ENCODE measurements at regions of chr1 and their contacts with region 1.

Region 1: DNA sequence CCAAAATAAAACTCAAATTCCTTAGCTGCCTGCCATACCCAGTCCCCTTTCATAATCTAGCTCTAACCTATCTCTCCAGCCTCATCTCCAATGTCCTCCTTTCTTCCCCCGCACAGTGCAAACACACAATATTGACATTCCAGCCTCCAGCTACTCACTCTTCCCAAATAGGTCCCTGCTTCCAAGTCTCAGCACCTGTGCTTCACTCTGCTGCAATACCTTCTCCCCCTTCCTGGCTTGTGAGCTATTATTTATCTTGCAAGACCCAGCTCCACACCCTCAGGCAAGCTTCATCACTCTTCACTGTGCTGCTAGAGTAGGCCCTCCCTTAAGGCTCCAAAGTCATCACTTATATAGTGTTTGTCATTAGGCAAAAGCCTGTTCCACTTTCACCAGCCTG is 9.7 kb downstream of the PLPP3 start:
- DNase-seq: no peak
- ATAC-seq: peak; percentile 61
- H3K4me3 ChIP-seq: no peak overlapping the region
- H3K27ac ChIP-seq: no peak overlapping the region
- H3K4me1 ChIP-seq: peaks cover 36% of the 10 kb centered on the region
- H3K27me3 ChIP-seq: no peaks in the 10 kb centered on the region
- CTCF ChIP-seq: no peak

Region 2: DNA sequence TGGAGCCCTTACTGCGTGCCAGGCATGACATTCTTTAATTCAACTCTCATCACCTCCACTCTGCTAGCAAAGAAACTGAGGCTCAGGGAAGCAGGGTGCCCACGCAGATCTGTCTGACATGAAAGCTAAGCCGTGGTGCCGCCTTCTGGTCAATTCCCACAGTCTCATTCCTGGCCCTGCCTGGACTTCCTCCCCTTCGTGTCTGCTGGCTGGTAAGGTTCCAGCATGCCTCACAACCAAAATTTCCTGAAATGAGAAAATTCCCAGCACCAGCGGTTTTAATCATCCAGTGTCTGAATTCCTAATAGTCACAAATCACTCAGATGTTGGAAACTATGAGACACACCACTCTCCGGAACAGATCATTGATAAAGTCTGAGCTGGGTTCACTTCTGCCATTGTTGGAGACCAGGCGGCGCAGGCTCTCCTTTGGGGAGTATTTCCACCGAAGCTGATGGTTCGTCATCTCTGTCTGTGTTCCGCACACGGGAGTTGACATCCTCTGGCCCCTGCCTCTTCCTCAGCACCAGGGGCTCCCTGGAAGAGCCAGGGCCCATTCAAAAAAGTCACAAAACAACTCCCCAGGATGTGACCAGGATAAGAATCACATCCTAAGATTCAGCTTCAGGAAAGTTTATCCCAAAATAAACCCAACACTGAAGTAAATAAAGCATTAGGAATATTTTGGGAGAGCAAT is 158.0 kb before region 1 on chr1:
- intact Hi-C with region 1: loop called (anchors 10 kb)
- DNase-seq: no peak
- ATAC-seq: no peak
- H3K4me3 ChIP-seq: no peak overlapping the region
- H3K27ac ChIP-seq: peak overlapping the region; percentile 42
- H3K4me1 ChIP-seq: peaks cover 8% of the 10 kb centered on the region
- H3K27me3 ChIP-seq: no peaks in the 10 kb centered on the region
- CTCF ChIP-seq: no peak

Region 3: DNA sequence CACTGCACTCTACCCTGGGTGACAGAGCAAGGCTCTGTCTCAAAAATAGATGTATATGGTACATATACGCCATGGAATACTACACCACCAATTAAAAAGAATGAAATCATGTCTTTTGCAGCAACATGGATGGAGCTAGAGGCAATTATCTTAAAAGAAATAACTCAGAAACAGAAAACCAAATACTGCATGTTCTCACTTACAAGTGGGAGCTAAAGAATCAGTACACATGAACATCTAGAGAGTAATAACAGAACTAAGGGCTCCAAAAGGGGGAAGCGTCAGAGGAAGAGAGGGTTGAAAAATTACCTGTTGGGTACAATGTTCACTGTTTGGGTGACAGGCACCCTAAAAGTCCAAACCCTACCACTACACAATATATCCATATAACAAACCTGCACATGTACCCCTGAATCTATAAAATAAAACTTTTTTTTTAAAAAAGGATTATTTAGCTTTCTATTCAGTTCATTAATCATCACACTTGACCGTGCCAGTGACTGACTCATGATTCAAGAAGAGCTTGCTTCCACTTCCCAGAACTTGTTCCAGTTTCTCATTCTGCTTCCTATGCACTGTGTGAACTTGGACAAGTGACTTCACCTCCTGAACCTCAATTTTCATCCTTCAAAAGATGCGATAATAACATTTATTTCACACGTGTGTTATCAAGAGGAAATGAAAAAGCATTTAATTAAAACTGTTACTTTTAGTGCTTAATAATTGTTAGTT is 99.9 kb before region 1 on chr1:
- intact Hi-C with region 1: no loop called
- DNase-seq: no peak
- ATAC-seq: peak; percentile 62
- H3K4me3 ChIP-seq: no peak overlapping the region
- H3K27ac ChIP-seq: peak overlapping the region; percentile 63
- H3K4me1 ChIP-seq: peaks cover 34% of the 10 kb centered on the region
- H3K27me3 ChIP-seq: no peaks in the 10 kb centered on the region
- CTCF ChIP-seq: no peak

Region 4: DNA sequence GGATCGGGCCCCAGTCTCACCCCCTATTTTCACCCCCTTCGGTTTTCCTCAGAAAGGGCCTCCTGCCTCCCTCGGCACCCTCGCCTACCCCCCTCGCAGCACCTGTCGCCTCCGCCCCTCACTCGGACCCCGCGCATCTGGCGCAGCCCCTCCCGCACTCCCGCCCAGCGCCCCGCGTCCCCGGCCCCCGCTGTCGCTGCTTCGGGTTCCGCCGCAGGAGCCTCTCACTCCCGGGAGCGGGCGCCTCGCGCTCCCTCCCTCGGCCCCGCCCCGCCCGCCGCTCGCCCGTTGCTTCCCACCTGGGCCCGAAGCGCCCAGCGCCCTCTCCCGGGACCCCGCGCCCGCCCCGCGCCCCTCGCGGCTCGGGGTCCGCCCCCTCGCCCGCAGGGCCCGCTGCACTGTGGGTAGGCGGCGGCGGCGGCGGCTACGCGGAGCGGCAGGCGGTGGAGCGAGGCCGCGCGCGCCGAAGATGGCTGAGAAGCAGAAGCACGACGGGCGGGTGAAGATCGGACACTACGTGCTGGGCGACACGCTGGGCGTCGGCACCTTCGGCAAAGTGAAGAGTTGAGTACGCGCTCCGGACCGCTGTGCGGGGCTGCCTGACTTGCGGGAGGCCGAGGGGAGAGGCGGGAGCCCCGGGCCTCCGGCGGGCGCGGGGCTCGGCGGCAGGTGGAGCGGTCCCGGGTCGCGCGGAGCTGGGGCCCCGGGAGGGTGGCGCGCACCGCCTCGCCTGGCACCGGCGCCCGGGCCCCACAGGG is 75.4 kb after region 1 on chr1 and contains the start of gene PRKAA2:
- intact Hi-C with region 1: no loop called
- DNase-seq: peak; percentile 69
- ATAC-seq: peak; percentile 91
- H3K4me3 ChIP-seq: peak within 1 kb of the TSS; percentile 53
- H3K27ac ChIP-seq: peak within 1 kb of the TSS; percentile 42
- H3K4me1 ChIP-seq: no peaks in the 10 kb centered on the region
- H3K27me3 ChIP-seq: peaks cover 4% of the 10 kb centered on the region
- CTCF ChIP-seq: no peak
- total RNA-seq, gene PRKAA2: 3.8 TPM